Gastrocnemius medialis (tissue), 4 donors: ENCODE measurements at regions of chr22 and their contacts with region 1.

Region 1: DNA sequence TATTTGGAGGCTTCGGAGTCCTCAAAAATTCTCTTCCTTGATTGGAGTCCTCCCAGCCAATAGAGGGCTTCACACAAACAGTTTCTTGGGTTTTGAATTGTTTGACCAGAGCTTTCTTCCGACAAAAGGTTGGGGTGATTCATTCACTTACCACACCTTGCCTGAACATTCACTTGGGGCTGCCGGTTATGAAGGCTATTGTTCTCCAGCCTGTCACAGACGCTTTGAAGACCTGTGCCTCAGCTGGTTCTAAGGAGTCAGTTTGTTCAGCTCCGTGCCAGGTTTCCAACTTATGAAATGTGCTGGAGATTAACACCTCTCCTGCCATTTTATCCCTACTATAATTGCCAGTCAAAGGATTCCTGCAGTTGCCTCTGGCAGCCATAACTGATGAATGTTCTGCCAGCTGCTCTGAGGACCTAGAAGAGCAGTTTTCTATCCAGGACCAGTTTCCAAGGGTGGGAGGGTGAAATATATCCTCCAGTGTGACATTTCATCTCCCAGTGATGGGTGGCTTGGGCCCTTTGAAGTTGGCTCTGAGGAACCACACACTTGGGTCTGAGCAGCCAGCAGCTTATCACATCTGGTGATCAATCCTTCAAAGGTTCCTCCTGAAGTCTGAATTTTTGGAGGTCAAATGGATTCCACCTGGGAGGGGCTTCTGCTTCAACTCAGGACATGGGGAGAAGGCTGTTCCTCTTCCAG is 31.4 kb downstream of the LIMK2 start:
- DNase-seq: peak; percentile 60 to 73
- ATAC-seq: peak; percentile 81 to 89
- H3K4me3 ChIP-seq: no peak overlapping the region
- H3K27ac ChIP-seq: peak overlapping the region; percentile 68 to 81 (median 77)
- H3K4me1 ChIP-seq: peaks cover 27 to 29% of the 10 kb centered on the region in 2 donors
- H3K27me3 ChIP-seq: no peaks in the 10 kb centered on the region
- CTCF ChIP-seq: no peak
- POLR2A ChIP-seq: no peak

Region 2: GRCh38 chr22:31173386-31174145 is 69.9 kb before region 1 on chr22:
- in situ Hi-C with region 1: no loop called
- intact Hi-C with region 1: no loop called
- DNase-seq: peak; percentile 26 to 37
- ATAC-seq: peak; percentile 78 to 85
- H3K4me3 ChIP-seq: no peak overlapping the region
- H3K27ac ChIP-seq: peak overlapping the region; percentile 73 to 83 (median 78)
- H3K4me1 ChIP-seq: peaks cover 65% of the 10 kb centered on the region in 2 donors
- H3K27me3 ChIP-seq: no peaks in the 10 kb centered on the region
- CTCF ChIP-seq: no peak
- POLR2A ChIP-seq: no peak

Region 3: GRCh38 chr22:31206906-31207678 is 36.4 kb before region 1 on chr22:
- in situ Hi-C with region 1: no loop called
- intact Hi-C with region 1: loop called (anchors 1 kb)
- DNase-seq: peak; percentile 45 to 75
- ATAC-seq: peak; percentile 14 to 19
- H3K4me3 ChIP-seq: no peak overlapping the region
- H3K27ac ChIP-seq: peak overlapping the region; percentile 57 to 93 (median 83)
- H3K4me1 ChIP-seq: peaks cover 34 to 45% of the 10 kb centered on the region in 2 donors
- H3K27me3 ChIP-seq: no peaks in the 10 kb centered on the region
- CTCF ChIP-seq: no peak
- POLR2A ChIP-seq: no peak